Thyroid gland (tissue), 4 donors: ENCODE measurements at regions of chr2 and their contacts with region 1.

Region 1: DNA sequence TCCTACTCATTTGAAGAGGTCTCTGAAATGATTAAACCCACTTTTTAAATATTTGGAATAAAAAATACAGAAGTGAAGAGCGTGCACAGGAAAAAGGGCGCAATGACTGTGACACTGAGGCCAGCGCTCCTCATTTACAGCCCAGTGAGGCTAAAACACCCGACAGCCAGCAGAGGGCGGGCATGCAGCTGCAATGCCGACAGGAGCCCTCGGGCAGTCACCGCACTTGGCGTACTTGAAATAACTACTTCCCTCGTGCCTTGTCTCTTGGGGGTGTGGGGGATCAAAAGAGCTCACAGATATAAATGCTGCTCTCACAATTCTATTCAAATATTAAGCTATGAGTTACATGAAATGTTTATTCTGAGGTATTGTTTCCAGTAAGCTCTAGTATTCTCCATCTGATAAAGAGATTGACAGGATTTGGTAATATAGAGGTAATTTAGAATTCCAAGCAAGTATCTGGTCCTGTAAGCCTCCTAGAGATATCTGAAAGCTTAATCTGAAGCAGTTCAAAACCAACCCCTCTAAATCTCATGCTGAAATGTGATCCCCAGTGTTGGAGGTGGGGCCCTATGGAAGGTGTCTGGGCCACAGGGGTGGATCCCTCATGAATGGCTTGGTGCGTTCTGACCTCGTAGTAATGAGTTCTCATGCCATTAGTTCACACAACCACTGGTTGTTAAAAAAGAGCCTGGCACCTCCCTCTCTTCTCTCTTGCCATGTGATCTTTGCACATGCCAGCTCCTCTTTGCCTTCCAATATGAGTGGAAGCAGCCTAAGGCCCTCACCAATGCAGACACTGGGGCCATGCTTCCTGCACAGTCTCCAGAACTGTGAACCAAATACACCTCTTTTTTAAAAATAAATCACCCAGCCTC is 93.6 kb downstream of the ZAP70 start:
- DNase-seq: peak; percentile 87 to 91
- H3K4me3 ChIP-seq: no peak overlapping the region
- H3K27ac ChIP-seq: no peak overlapping the region
- H3K4me1 ChIP-seq: no peaks in the 10 kb centered on the region
- H3K27me3 ChIP-seq: no peaks in the 10 kb centered on the region
- CTCF ChIP-seq: peak; percentile 67 to 94 (median 88)
- POLR2A ChIP-seq: no peak

Region 2: GRCh38 chr2:97900806-97901205 is 93.8 kb after region 1 on chr2:
- intact Hi-C with region 1: no loop called
- DNase-seq: no peak
- H3K4me3 ChIP-seq: no peak overlapping the region
- H3K27ac ChIP-seq: no peak overlapping the region
- H3K4me1 ChIP-seq: no peaks in the 10 kb centered on the region
- H3K27me3 ChIP-seq: no peaks in the 10 kb centered on the region
- CTCF ChIP-seq: no peak
- POLR2A ChIP-seq: no peak

Region 3: DNA sequence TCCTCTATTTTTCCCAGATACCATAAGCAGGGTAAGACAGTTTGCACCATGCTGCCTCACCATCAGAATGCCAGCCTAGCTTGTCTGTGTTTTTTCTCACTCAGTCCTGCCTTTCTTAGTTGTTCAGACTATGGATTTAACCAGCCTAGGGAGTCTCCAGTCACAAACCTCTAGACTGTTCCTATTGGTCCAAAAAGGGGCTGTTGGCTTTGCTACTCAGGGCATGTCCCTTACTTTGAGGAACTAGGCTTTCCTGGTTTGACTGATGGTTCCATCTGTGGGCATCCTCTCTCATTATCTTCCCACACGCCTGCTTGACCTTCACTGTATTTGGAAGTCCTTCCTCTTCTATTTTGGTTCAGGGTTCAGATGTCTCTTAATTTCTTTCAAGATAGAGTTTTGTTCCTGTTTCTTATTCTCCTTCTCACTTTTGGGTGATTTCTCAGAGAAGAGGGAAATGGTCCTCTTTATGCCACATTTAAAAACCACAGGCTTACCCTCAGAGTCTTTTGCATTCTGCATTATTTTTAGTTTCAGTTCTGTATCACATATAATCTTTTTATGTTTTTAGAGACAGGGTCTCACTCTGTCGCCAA is 220.0 kb after region 1 on chr2:
- intact Hi-C with region 1: no loop called
- DNase-seq: no peak
- H3K4me3 ChIP-seq: no peak overlapping the region
- H3K27ac ChIP-seq: no peak overlapping the region
- H3K4me1 ChIP-seq: no peaks in the 10 kb centered on the region
- H3K27me3 ChIP-seq: no peaks in the 10 kb centered on the region
- CTCF ChIP-seq: no peak
- POLR2A ChIP-seq: no peak

Region 4: DNA sequence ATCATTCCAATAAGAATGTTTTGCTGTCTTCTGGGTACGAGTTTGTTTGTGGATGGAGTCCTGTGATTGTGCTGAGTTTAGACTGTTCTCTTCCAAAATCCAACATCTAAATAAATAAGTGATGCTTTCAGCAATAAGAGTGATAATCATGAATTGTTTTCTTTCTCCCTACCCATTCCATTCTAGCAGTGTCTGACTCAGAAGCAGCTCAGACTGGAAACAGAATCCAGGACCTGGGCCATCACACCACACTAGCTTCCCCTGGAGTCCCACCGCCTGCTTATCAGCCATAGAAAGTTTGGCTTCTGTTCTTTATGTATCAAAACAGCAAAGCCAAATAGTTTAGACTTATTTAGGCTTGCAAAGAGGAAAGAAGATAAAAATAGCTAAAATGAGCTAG is 462.9 kb after region 1 on chr2:
- intact Hi-C with region 1: loop called (anchors 10 kb)
- DNase-seq: no peak
- H3K4me3 ChIP-seq: no peak overlapping the region
- H3K27ac ChIP-seq: no peak overlapping the region
- H3K4me1 ChIP-seq: no peaks in the 10 kb centered on the region
- H3K27me3 ChIP-seq: no peaks in the 10 kb centered on the region
- CTCF ChIP-seq: no peak
- POLR2A ChIP-seq: no peak

Region 5: DNA sequence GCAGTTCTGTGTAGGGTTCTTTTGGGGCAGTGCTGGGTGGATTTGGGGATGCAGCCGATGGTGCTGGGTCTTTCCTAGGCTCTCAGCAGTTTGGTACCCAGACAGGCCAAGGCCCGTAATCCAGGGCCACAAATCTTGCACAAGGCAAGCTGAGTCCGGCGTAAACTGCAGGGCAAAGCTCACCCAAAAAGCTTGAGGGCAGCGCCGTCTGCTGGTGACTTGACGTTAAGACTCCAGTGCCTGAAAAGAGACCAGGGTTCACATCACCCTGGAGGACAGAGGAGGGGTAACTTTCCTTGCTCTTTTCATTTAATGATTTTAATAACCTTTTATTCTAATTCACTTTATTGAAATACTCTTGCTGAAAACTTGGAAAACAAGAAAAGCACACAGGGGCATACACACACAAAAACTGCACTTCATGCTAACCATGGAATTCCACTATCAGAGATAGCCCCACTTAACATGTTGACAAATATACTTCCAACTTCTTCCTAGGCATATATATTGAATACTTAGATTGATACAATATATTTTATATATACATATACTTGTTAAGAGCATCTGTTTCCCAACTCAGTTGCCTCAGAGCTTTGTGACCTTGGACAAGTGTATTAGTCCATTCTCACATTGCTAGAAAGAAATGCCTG is 578.2 kb after region 1 on chr2:
- intact Hi-C with region 1: loop called (anchors 10 kb)
- DNase-seq: peak; percentile 63 to 69
- H3K4me3 ChIP-seq: no peak overlapping the region
- H3K27ac ChIP-seq: no peak overlapping the region
- H3K4me1 ChIP-seq: no peaks in the 10 kb centered on the region
- H3K27me3 ChIP-seq: no peaks in the 10 kb centered on the region
- CTCF ChIP-seq: peak; percentile 82 to 93 (median 88)
- POLR2A ChIP-seq: no peak